Endothelial cell of umbilical vein (primary cell): ENCODE measurements at regions of chr6 and their contacts with region 1.

Region 1: GRCh38 chr6:76043690-76044089 is 28.8 kb downstream of the IMPG1 start:
- DNase-seq: no peak
- H3K4me3 ChIP-seq: no peak overlapping the region
- H3K27ac ChIP-seq: no peak overlapping the region
- H3K4me1 ChIP-seq: no peaks in the 10 kb centered on the region
- H3K27me3 ChIP-seq: no peaks in the 10 kb centered on the region
- CTCF ChIP-seq: no peak
- POLR2A ChIP-seq: no peak

Region 2: GRCh38 chr6:77926198-77926752 is 1882.6 kb after region 1 on chr6:
- CTCF ChIA-PET with region 1: no interaction called
- POLR2A ChIA-PET with region 1: no interaction called
- dilution Hi-C with region 1: no loop called
- intact Hi-C with region 1: loop called (anchors 5 kb)
- DNase-seq: peak; percentile 6
- H3K4me3 ChIP-seq: no peak overlapping the region
- H3K27ac ChIP-seq: no peak overlapping the region
- H3K4me1 ChIP-seq: no peaks in the 10 kb centered on the region
- H3K27me3 ChIP-seq: no peaks in the 10 kb centered on the region
- CTCF ChIP-seq: peak in 1 of 2 donors; percentile 2
- POLR2A ChIP-seq: no peak